Mammary epithelial cell (primary cell): ENCODE measurements at regions of chr4 and their contacts with region 1.

Region 1: GRCh38 chr4:97279410-97279809 is 863.9 kb downstream of the STPG2 start:
- DNase-seq: no peak
- H3K4me3 ChIP-seq: no peak overlapping the region
- H3K27ac ChIP-seq: no peak overlapping the region
- H3K4me1 ChIP-seq: no peaks in the 10 kb centered on the region
- H3K27me3 ChIP-seq: no peaks in the 10 kb centered on the region
- CTCF ChIP-seq: no peak

Region 2: DNA sequence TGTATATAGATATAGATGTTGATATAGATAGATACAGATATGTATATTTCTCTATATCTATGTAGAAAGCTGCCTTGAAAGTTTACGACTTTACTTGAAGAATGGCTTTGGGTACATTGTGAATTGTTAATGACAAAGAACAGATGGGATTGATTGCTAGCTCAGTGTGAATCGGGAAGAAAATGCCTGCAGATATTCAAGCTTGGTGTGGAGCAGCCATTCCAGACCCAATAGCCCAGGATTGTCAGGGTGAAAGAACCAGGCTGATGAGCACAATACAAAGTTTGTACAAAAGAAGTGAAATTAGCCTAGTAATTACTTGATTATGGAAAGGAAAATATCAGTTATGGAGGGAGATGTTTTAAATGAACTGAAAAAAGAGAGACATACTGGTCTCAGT is 82.3 kb before region 1 on chr4:
- CTCF ChIA-PET with region 1: no interaction called
- dilution Hi-C with region 1: no loop called
- in situ Hi-C with region 1: no loop called
- intact Hi-C with region 1: loop called (anchors 2 kb)
- DNase-seq: no peak
- H3K4me3 ChIP-seq: no peak overlapping the region
- H3K27ac ChIP-seq: no peak overlapping the region
- H3K4me1 ChIP-seq: no peaks in the 10 kb centered on the region
- H3K27me3 ChIP-seq: no peaks in the 10 kb centered on the region
- CTCF ChIP-seq: no peak